ENCODE measurements at regions of chr13 and their contacts with region 1.

Region 1: DNA sequence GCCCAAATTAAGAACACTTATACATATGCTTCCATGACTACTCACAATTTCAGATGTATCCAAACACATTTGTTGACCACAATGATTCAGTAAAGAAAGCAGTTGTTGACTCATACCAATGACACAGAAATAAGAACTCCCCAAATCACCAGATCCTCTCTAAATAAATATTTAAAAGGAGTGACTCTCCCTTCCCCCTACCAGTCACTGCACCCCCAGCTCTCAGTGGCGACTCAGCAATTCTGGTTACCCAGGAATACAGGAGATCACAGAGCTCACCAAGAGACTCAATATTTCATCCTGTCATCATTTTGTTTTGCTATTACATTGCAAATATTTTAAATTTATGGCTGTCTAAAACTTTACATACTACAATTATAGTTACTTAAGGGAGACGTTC is 131.5 kb downstream of the RGCC start:
- DNase-seq: peak in 1 of 9 donors; percentile 32
- ATAC-seq: peak; percentile 82
- H3K4me3 ChIP-seq: no peak overlapping the region
- H3K4me3 Mint-ChIP-seq: no peak overlapping the region
- H3K27ac ChIP-seq: no peak overlapping the region
- H3K27ac Mint-ChIP-seq: no peak overlapping the region
- H3K4me1 ChIP-seq: peaks cover 0 to 6% of the 10 kb centered on the region in 2 donors
- H3K4me1 Mint-ChIP-seq: peaks cover 0 to 10% (median 4%) of the 10 kb centered on the region in 7 donors
- H3K27me3 ChIP-seq: no peaks in the 10 kb centered on the region
- H3K27me3 Mint-ChIP-seq: no peaks in the 10 kb centered on the region

Region 2: DNA sequence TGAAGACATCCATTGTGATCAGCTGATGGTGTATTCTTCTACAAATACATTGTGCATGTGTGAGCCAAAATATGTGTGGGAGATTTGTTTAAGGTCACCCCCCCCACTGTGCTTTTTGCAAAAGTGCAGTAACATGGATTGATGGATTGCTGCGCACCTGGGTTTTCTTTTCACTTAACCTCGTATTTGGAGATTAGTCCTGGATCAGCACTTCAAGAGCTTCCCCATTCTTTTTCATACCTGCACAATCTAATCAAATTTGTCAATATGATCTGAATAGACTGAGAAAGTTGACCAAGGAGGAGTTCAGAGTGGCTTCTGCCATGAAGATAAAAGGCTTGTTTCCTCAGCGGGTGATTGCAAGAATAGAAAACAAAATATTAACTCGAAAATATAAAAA is 254.1 kb before region 1 on chr13:
- CTCF ChIA-PET with region 1: no interaction called
- POLR2A ChIA-PET with region 1: no interaction called
- intact Hi-C with region 1: no loop called
- DNase-seq: no peak
- ATAC-seq: no peak
- H3K4me3 ChIP-seq: no peak overlapping the region
- H3K4me3 Mint-ChIP-seq: no peak overlapping the region
- H3K27ac ChIP-seq: no peak overlapping the region
- H3K27ac Mint-ChIP-seq: peak overlapping the region in 6 of 9 donors; percentile 18 to 81 (median 25)
- H3K4me1 ChIP-seq: no peaks in the 10 kb centered on the region
- H3K4me1 Mint-ChIP-seq: peaks cover 0 to 81% (median 55%) of the 10 kb centered on the region in 7 donors
- H3K27me3 ChIP-seq: no peaks in the 10 kb centered on the region
- H3K27me3 Mint-ChIP-seq: no peaks in the 10 kb centered on the region

Region 3: GRCh38 chr13:41411522-41411921 is 177.4 kb before region 1 on chr13:
- CTCF ChIA-PET with region 1: interaction called, 6 read pairs
- POLR2A ChIA-PET with region 1: no interaction called
- intact Hi-C with region 1: loop called in 1 of 2 experiments (anchors 1 kb)
- DNase-seq: peak in 6 of 9 donors; percentile 17 to 54 (median 28)
- ATAC-seq: peak; percentile 48
- H3K4me3 ChIP-seq: no peak overlapping the region
- H3K4me3 Mint-ChIP-seq: no peak overlapping the region
- H3K27ac ChIP-seq: no peak overlapping the region
- H3K27ac Mint-ChIP-seq: peak overlapping the region in 2 of 9 donors; percentile 36 to 66
- H3K4me1 ChIP-seq: no peaks in the 10 kb centered on the region
- H3K4me1 Mint-ChIP-seq: peaks cover 0 to 4% (median 0%) of the 10 kb centered on the region in 7 donors
- H3K27me3 ChIP-seq: no peaks in the 10 kb centered on the region
- H3K27me3 Mint-ChIP-seq: peaks cover 0 to 13% (median 0%) of the 10 kb centered on the region in 5 donors

Region 4: GRCh38 chr13:41428155-41428554 is 160.7 kb before region 1 on chr13:
- CTCF ChIA-PET with region 1: no interaction called
- POLR2A ChIA-PET with region 1: no interaction called
- intact Hi-C with region 1: loop called in 1 of 2 experiments (anchors 1 kb)
- DNase-seq: peak; percentile 14 to 55 (median 38)
- ATAC-seq: peak; percentile 93
- H3K4me3 ChIP-seq: no peak overlapping the region
- H3K4me3 Mint-ChIP-seq: peak overlapping the region; percentile 13 to 86 (median 62)
- H3K27ac ChIP-seq: no peak overlapping the region
- H3K27ac Mint-ChIP-seq: peak overlapping the region in 2 of 9 donors; percentile 64 to 84
- H3K4me1 ChIP-seq: peaks cover 0 to 6% of the 10 kb centered on the region in 2 donors
- H3K4me1 Mint-ChIP-seq: peaks cover 4 to 15% (median 11%) of the 10 kb centered on the region in 7 donors
- H3K27me3 ChIP-seq: no peaks in the 10 kb centered on the region
- H3K27me3 Mint-ChIP-seq: peaks cover 0 to 7% (median 6%) of the 10 kb centered on the region in 5 donors

Region 5: DNA sequence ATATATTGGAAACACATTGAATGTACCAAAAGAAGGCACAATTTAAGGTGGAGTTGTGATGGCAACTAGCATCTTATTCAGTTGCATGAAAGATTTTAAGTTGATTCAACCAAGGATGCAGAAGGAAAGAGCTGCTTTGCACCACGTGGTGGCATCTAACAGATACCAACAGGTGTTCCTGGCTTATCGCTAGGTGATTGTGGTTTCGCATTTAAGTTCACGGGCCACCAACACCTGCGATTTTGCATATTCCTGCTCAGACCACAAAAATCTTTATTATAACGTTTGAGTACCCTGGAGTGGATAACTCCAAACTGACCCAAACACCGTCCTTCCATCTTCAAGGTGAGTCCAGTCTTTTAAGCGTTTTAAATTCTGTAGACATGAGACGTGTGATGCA is 86.2 kb before region 1 on chr13:
- CTCF ChIA-PET with region 1: interaction called, 3 read pairs
- POLR2A ChIA-PET with region 1: no interaction called
- intact Hi-C with region 1: loop called in 1 of 2 experiments (anchors 2 kb)
- DNase-seq: peak in 7 of 9 donors; percentile 34 to 63 (median 56)
- ATAC-seq: peak; percentile 72
- H3K4me3 ChIP-seq: no peak overlapping the region
- H3K4me3 Mint-ChIP-seq: peak overlapping the region in 8 of 10 donors; percentile 35 to 68 (median 51)
- H3K27ac ChIP-seq: peak overlapping the region; percentile 22
- H3K27ac Mint-ChIP-seq: peak overlapping the region; percentile 34 to 96 (median 91)
- H3K4me1 ChIP-seq: peaks cover 32 to 43% of the 10 kb centered on the region in 2 donors
- H3K4me1 Mint-ChIP-seq: peaks cover 41 to 63% (median 55%) of the 10 kb centered on the region in 7 donors
- H3K27me3 ChIP-seq: no peaks in the 10 kb centered on the region
- H3K27me3 Mint-ChIP-seq: no peaks in the 10 kb centered on the region

Measured in naive thymus-derived CD4-positive, alpha-beta T cell (primary cell).